Endothelial cell of umbilical vein (primary cell): ENCODE measurements at regions of chr18 and their contacts with region 1.

Region 1: DNA sequence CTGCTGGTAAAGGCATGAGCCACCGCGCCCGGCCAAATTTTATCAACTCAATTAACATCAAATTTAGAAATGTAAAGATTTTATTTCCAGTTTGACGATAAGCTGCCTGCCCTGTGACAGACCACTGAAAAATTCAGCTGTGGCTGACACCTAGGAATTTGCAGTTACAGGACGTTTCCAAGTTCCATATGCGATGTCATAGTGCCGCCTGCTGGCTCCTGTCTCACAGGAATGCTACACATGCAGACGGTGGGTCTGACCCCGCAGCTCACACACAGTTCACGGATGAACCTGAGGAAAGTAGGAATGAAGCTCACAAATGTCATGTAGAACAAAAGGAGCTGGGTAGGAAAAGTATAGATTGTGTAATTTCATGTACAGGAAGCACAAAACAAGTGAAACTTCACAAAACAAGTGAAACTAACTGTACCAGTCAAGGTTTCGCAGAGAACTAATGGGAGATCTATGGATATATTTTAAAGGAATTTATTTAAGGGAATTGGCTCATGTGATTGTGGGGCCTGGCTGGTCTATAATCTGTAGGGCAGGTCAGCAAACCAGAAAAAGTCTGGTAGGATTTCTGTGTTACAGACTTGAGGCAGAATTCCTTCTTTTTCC is 13.2 kb upstream of the SEH1L start:
- DNase-seq: peak; percentile 80
- H3K4me3 ChIP-seq: no peak overlapping the region
- H3K27ac ChIP-seq: no peak overlapping the region
- H3K4me1 ChIP-seq: no peaks in the 10 kb centered on the region
- H3K27me3 ChIP-seq: peaks cover 4 to 5% of the 10 kb centered on the region in 2 experiments
- CTCF ChIP-seq: peak; percentile 84 to 92
- POLR2A ChIP-seq: no peak

Region 2: DNA sequence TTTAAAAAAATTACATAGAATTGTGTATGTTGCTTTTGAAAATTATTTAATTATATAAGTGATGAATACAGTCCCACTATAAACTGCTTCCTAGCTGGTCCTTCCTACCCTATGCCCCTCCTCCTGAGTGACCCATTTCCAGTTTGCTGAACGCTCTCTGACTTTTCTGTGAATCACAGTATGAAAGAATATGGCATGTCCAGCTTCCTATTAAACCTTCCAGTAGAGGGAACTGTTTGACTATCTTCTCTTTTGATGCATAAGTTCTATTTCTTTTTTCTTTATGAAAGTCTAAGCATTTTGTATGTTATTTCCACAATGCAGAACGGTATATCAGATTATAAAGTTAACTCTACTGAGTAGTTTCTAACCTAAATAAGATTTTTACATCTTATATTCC is 190.5 kb before region 1 on chr18:
- CTCF ChIA-PET with region 1: interaction called, 101 read pairs
- POLR2A ChIA-PET with region 1: interaction called, 3 read pairs
- dilution Hi-C with region 1: no loop called
- intact Hi-C with region 1: loop called (anchors 1 kb)
- DNase-seq: peak; percentile 79
- H3K4me3 ChIP-seq: no peak overlapping the region
- H3K27ac ChIP-seq: no peak overlapping the region
- H3K4me1 ChIP-seq: no peaks in the 10 kb centered on the region
- H3K27me3 ChIP-seq: peaks cover 0 to 2% of the 10 kb centered on the region in 2 experiments
- CTCF ChIP-seq: peak; percentile 37 to 40
- POLR2A ChIP-seq: no peak

Region 3: DNA sequence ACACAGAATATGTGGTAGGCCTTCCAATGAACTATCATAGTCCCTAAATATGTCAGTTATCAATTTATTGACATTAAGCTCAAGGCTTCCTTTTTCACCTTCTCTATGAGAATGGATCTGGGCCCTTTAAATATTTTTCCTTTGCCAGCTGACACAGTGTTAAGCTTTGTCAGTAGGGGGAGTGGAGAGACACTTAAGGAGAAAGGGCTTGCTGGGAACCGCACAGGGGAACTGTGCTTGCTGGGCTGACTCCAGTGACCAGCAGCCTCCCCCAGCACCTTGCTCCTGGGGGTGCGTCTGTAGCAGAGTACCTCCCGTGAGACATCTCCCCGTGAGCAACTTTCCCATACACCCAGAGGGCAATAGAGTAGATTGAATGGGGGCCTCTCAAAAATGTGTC is 44.1 kb before region 1 on chr18:
- CTCF ChIA-PET with region 1: interaction called, 25 read pairs
- POLR2A ChIA-PET with region 1: no interaction called
- dilution Hi-C with region 1: no loop called
- intact Hi-C with region 1: loop called (anchors 2 kb)
- DNase-seq: no peak
- H3K4me3 ChIP-seq: no peak overlapping the region
- H3K27ac ChIP-seq: no peak overlapping the region
- H3K4me1 ChIP-seq: no peaks in the 10 kb centered on the region
- H3K27me3 ChIP-seq: peaks cover 7 to 16% of the 10 kb centered on the region in 2 experiments
- CTCF ChIP-seq: peak in 1 of 2 donors; percentile 13
- POLR2A ChIP-seq: no peak

Region 4: GRCh38 chr18:12947355-12948041 is 12.9 kb after region 1 on chr18 and contains the start of gene SEH1L:
- CTCF ChIA-PET with region 1: interaction called, 12 read pairs
- POLR2A ChIA-PET with region 1: no interaction called
- dilution Hi-C with region 1: no loop called
- intact Hi-C with region 1: no loop called
- DNase-seq: peak; percentile 98
- H3K4me3 ChIP-seq: peak within 1 kb of the TSS; percentile 50 to 81 (median 80)
- H3K27ac ChIP-seq: peak within 1 kb of the TSS; percentile 90
- H3K4me1 ChIP-seq: peaks cover 12% of the 10 kb centered on the region
- H3K27me3 ChIP-seq: no peaks in the 10 kb centered on the region
- CTCF ChIP-seq: no peak
- POLR2A ChIP-seq: no peak
- total RNA-seq, gene SEH1L: 42.8 and 45.9 TPM in 2 replicates